PC-9 (cell line): ENCODE measurements at regions of chr22 and their contacts with region 1.

Region 1: GRCh38 chr22:31107178-31107893 is at the start of gene SELENOM:
- DNase-seq: peak; percentile 93 to 97
- H3K4me3 ChIP-seq: peak within 1 kb of the TSS; percentile 54
- H3K27ac ChIP-seq: no peak within 1 kb of the TSS
- H3K4me1 ChIP-seq: peaks cover 20% of the 10 kb centered on the region
- H3K27me3 ChIP-seq: no peaks in the 10 kb centered on the region
- CTCF ChIP-seq: peak; percentile 96
- total RNA-seq, gene SELENOM: 20.7 and 23.3 TPM in 2 replicates

Region 2: GRCh38 chr22:30920407-30920806 is 186.9 kb before region 1 on chr22:
- CTCF ChIA-PET with region 1: no interaction called
- POLR2A ChIA-PET with region 1: interaction called, 19 read pairs
- intact Hi-C with region 1: no loop called
- DNase-seq: peak; percentile 46 to 74
- H3K4me3 ChIP-seq: no peak overlapping the region
- H3K27ac ChIP-seq: no peak overlapping the region
- H3K4me1 ChIP-seq: no peaks in the 10 kb centered on the region
- H3K27me3 ChIP-seq: no peaks in the 10 kb centered on the region
- CTCF ChIP-seq: peak; percentile 98

Region 3: DNA sequence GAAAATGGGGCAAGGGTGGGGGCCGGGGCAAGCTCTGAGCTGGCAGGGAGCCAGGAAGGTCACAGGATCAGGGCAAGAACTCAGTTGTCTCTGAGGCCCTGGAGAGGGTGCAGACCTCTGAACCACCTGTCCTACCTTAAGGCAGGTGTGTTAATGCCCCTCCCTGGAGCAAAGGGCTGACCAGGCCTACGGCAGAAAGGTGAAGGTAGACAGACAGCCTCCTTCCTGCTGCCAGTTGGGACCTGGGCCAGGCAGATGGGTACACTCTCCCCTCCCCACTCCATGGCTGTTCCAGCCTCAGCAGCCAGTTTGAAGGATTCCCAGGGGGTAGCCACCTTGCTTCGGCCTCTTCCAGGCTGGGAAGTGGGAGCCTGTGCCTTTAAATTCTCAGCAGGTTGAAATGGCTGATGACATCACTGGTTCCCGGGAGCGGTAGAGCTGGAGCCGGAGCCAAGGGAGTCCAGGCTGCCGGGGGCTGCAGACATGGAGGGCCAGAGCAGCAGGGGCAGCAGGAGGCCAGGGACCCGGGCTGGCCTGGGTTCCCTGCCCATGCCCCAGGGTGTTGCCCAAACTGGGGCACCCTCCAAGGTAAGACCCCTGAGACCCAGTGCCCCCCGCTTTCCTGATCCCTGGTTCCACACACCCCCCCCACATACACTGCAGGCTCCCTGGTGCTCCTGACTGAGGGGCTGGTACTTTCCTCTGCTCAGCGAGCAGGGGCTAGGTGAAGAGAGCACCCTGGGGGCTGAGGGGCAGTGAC is 15.4 kb after region 1 on chr22 and contains the start of gene INPP5J:
- CTCF ChIA-PET with region 1: no interaction called
- POLR2A ChIA-PET with region 1: no interaction called
- intact Hi-C with region 1: no loop called
- DNase-seq: peak; percentile 34 to 48
- H3K4me3 ChIP-seq: peak within 1 kb of the TSS; percentile 57
- H3K27ac ChIP-seq: no peak within 1 kb of the TSS
- H3K4me1 ChIP-seq: peaks cover 6% of the 10 kb centered on the region; the same call in 1 of the 2 replicates
- H3K27me3 ChIP-seq: peaks cover 16% of the 10 kb centered on the region; the same call in 1 of the 2 replicates
- CTCF ChIP-seq: no peak
- total RNA-seq, gene INPP5J: 1.7 and 3.1 TPM in 2 replicates

Region 4: GRCh38 chr22:31211862-31212730 is 104.8 kb after region 1 on chr22 and contains the start of gene LIMK2:
- CTCF ChIA-PET with region 1: no interaction called
- POLR2A ChIA-PET with region 1: no interaction called
- intact Hi-C with region 1: loop called (anchors 10 kb)
- DNase-seq: peak; percentile 75 to 94
- H3K4me3 ChIP-seq: peak within 1 kb of the TSS; percentile 87
- H3K27ac ChIP-seq: no peak within 1 kb of the TSS
- H3K4me1 ChIP-seq: peaks cover 19% of the 10 kb centered on the region
- H3K27me3 ChIP-seq: no peaks in the 10 kb centered on the region
- CTCF ChIP-seq: peak; percentile 89
- total RNA-seq, gene LIMK2: 32.8 and 42.5 TPM in 2 replicates

Region 5: GRCh38 chr22:31230871-31231621 is 123.7 kb after region 1 on chr22:
- CTCF ChIA-PET with region 1: no interaction called
- POLR2A ChIA-PET with region 1: no interaction called
- intact Hi-C with region 1: loop called (anchors 2 kb)
- DNase-seq: peak; percentile 30 to 68
- H3K4me3 ChIP-seq: no peak overlapping the region
- H3K27ac ChIP-seq: no peak overlapping the region
- H3K4me1 ChIP-seq: peaks cover 17% of the 10 kb centered on the region
- H3K27me3 ChIP-seq: no peaks in the 10 kb centered on the region
- CTCF ChIP-seq: peak; percentile 83

Region 6: DNA sequence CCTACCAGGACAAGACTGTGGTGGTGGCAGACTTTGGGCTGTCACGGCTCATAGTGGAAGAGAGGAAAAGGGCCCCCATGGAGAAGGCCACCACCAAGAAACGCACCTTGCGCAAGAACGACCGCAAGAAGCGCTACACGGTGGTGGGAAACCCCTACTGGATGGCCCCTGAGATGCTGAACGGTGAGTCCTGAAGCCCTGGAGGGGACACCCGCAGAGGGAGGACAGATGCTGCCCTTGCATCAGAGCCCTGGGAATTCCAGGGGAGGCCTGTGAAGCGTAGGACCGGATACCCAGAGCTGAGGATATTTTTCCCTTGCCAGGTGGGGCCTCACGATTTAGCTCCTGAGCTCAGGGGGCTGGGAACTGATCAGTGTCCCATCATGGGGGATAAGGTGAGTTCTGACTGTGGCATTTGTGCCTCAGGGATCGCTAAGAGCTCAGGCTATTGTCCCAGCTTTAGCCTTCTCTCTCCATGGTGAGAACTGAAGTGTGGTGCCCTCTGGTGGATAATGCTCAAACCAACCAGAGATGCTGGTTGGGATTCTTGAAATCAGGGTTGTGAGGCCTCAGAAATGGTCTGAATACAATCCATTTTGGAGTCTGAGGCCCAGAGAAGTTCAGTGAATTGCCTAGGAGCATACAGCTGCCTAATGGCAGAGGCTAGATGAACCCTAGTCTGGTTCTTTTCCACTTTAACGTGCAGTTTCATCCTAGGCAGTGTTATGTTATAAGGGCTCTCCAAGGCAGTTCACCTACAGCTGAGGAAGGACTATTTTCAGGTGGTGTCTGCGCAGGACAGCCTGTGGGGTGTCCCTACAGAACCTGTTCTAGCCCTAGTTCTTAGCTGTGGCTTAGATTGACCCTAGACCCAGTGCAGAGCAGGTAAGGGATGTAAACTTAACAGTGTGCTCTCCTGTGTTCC is 165.4 kb after region 1 on chr22:
- CTCF ChIA-PET with region 1: interaction called, 5 read pairs
- POLR2A ChIA-PET with region 1: no interaction called
- intact Hi-C with region 1: loop called (anchors 2 kb)
- DNase-seq: peak; percentile 55 to 71
- H3K4me3 ChIP-seq: no peak overlapping the region
- H3K27ac ChIP-seq: no peak overlapping the region
- H3K4me1 ChIP-seq: peaks cover 50% of the 10 kb centered on the region
- H3K27me3 ChIP-seq: no peaks in the 10 kb centered on the region
- CTCF ChIP-seq: peak; percentile 88

Region 7: DNA sequence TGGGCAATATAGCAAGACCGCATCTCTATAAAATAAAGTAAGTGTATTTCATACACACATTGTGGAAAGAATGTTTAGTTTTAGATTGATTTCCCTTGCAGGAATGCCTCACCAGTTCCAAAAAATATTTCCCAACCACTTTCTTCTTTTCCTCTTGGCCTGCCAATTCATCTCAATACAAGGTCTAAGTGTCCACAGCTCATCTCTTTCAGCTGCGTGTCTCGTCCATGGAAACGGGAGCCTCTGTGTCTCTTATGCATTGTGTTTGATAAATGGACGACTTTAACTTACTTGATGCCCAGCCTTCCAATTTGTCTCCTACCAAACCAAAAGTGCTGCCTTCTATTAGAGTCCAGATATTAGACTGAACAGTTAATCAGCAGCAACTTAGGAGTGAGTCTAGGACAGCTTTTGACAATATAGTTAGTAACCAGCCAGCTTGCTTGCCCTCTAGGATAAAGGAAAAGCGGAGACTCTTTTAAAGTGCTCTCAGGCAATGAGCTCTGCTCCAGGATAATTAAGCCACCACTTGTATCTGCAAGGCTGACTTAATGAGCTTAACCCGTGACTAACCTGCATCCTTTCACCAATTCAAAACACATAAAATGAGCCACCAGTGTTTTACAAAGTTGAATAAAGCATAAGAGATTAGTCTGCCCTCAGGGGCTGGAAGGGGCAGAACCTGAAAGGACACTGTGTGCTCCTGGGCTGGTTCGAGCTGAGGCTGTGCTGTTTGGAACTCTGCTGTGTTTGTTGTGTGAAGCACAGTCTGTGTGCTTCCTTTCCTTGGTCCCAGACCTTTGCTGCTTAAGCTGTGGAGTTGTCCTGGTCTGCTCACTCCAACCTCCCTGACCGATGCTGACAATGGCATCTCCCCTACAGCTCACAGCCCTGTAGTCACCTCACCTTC is 1394.8 kb after region 1 on chr22:
- CTCF ChIA-PET with region 1: interaction called, 11 read pairs
- POLR2A ChIA-PET with region 1: no interaction called
- intact Hi-C with region 1: no loop called
- DNase-seq: no peak
- H3K4me3 ChIP-seq: no peak overlapping the region
- H3K27ac ChIP-seq: no peak overlapping the region
- H3K4me1 ChIP-seq: no peaks in the 10 kb centered on the region
- H3K27me3 ChIP-seq: no peaks in the 10 kb centered on the region
- CTCF ChIP-seq: no peak